Mammary epithelial cell (primary cell): ENCODE measurements at regions of chr22 and their contacts with region 1.

Region 1: DNA sequence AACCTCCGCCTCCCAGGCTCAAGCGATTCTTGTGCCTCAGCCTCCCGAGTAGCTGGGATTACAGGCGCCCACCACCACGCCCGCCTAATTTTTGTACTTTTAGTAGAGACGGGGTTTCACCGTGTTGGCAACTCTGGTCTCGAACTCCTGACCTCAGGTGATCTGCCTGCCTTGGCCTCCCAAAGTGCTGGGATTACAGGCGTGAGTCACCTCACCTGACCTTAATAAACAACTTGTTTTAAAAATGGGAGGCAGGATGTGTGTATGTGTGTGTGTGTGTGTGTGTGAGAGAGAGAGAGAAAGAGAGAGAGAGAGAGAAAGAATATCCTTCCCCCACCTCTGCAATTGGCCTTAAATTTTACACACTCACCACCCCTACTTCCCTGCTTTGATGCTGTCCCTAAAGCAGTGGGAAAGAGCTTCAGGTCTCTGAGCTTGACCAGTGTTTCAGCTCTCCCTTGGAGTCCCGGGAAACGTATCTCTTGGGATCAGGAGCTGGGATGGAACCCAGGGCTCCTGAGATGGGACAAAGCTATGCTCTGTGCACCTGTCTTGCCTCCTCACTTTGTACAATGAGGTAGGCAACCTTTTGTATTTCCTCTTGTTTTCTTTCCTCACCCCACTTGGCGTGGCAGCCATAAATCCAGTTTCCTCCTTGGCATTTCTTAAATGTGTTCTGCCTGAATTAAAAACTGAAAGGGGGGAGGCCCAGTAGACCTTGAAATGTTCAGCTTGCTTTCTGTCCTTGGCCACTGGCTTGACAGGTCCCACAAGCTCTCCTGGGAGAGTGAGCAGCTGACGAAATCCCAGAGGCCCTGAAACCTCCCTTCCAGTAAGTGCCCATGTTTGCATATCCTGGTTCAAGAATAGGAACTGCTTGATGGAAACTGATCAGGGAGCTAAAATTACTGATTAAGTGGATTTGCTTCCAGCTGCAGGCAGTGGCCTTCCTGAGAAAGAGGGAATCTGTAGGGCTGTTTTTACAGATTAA is 17.8 kb upstream of the XBP1 start:
- DNase-seq: no peak
- H3K4me3 ChIP-seq: no peak overlapping the region
- H3K27ac ChIP-seq: no peak overlapping the region
- H3K4me1 ChIP-seq: no peaks in the 10 kb centered on the region
- H3K27me3 ChIP-seq: no peaks in the 10 kb centered on the region
- CTCF ChIP-seq: no peak

Region 2: DNA sequence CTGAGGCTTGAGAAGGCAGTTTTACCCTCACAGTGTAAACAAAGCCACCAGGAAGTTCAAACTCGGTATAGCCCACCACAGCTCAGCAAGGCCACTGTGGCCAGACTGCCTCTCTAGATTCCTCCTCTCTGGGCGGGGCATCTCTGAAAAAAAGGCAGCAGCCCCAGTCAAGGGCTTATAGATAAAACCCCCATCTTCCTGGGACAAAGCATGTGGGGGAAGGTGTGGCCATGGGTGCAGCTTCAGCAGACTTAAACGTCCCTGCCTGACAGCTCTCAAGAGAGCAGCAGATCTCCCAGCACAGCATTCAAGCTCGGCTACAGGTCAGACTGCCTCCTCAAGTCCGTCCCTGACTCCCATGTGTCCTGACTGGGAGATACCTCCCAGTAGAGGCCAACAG is 208.3 kb before region 1 on chr22:
- CTCF ChIA-PET with region 1: no interaction called
- dilution Hi-C with region 1: loop called (anchors 10 kb)
- in situ Hi-C with region 1: no loop called
- intact Hi-C with region 1: no loop called
- DNase-seq: no peak
- H3K4me3 ChIP-seq: no peak overlapping the region
- H3K27ac ChIP-seq: no peak overlapping the region
- H3K4me1 ChIP-seq: no peaks in the 10 kb centered on the region
- H3K27me3 ChIP-seq: no peaks in the 10 kb centered on the region
- CTCF ChIP-seq: no peak